Calu3 (cell line): ENCODE measurements at regions of chr5 and their contacts with region 1.

Region 1: GRCh38 chr5:96702503-96703383 is 40.6 kb downstream of the CAST start:
- DNase-seq: peak; percentile 96
- H3K4me3 Mint-ChIP-seq: peak overlapping the region; percentile 94
- H3K27ac Mint-ChIP-seq: peak overlapping the region; percentile 73
- H3K4me1 Mint-ChIP-seq: peaks cover 66% of the 10 kb centered on the region
- H3K27me3 Mint-ChIP-seq: no peaks in the 10 kb centered on the region
- CTCF ChIP-seq: no peak

Region 2: DNA sequence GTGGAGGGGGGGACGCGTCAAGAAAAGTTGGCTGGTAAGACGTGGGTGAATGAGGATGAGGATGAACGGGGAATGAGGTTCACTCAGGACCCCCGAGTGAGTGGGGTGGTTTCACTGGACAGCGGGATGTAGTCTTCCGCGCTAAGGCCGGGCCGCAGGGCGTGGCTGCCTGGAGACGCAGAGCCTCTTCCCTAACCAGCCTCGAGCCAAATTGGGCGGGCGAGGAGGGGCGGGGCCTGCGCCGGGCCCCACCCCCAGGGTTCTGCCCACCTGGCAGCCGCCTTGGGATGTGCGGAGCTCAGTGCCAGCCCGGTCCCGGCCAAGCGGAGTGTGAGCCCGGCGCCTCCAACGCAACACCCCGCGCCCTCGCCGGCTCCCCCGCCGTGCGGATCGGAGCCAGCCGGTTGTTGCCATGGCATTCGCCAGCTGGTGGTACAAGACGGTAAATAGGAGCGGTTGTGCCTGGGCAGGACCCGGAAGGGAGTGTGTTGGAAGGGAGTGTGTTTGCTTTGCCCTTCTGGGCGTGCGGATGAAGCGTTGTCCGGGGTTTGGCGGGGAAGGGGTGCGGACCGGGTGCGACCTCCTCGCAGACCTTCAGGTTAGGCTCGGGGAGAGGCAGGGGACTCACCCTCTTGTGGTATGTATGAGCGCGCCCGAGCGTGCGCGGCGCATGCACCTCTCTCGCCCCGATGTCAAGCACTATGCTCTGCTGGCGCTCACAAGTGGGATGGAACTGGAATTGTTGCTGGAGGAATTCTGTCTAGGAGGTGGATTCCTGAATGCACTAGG is 39.8 kb before region 1 on chr5:
- CTCF ChIA-PET with region 1: no interaction called
- intact Hi-C with region 1: loop called (anchors 5 kb)
- DNase-seq: peak; percentile 98
- H3K4me3 Mint-ChIP-seq: peak overlapping the region; percentile 97
- H3K27ac Mint-ChIP-seq: peak overlapping the region; percentile 79
- H3K4me1 Mint-ChIP-seq: peaks cover 62% of the 10 kb centered on the region
- H3K27me3 Mint-ChIP-seq: no peaks in the 10 kb centered on the region
- CTCF ChIP-seq: no peak

Region 3: GRCh38 chr5:96687812-96688453 is 14.8 kb before region 1 on chr5:
- CTCF ChIA-PET with region 1: no interaction called
- intact Hi-C with region 1: no loop called
- DNase-seq: no peak
- H3K4me3 Mint-ChIP-seq: no peak overlapping the region
- H3K27ac Mint-ChIP-seq: no peak overlapping the region
- H3K4me1 Mint-ChIP-seq: peaks cover 30% of the 10 kb centered on the region
- H3K27me3 Mint-ChIP-seq: no peaks in the 10 kb centered on the region
- CTCF ChIP-seq: peak; percentile 65

Region 4: GRCh38 chr5:96714951-96715451 is 12.3 kb after region 1 on chr5:
- CTCF ChIA-PET with region 1: interaction called, 22 read pairs
- intact Hi-C with region 1: no loop called
- DNase-seq: peak; percentile 82
- H3K4me3 Mint-ChIP-seq: peak overlapping the region; percentile 28
- H3K27ac Mint-ChIP-seq: peak overlapping the region; percentile 77
- H3K4me1 Mint-ChIP-seq: peaks cover 77% of the 10 kb centered on the region
- H3K27me3 Mint-ChIP-seq: no peaks in the 10 kb centered on the region
- CTCF ChIP-seq: no peak